Gastrocnemius medialis (tissue), 4 donors: ENCODE measurements at regions of chr15 and their contacts with region 1.

Region 1: GRCh38 chr15:43440721-43441281 is 52.2 kb downstream of the TP53BP1 start:
- DNase-seq: peak; percentile 56 to 58
- ATAC-seq: peak; percentile 100
- H3K4me3 ChIP-seq: no peak overlapping the region
- H3K27ac ChIP-seq: peak overlapping the region; percentile 60 to 77 (median 72)
- H3K4me1 ChIP-seq: peaks cover 11% of the 10 kb centered on the region in 2 donors
- H3K27me3 ChIP-seq: no peaks in the 10 kb centered on the region
- CTCF ChIP-seq: peak; percentile 37 to 60 (median 47)
- POLR2A ChIP-seq: no peak

Region 2: DNA sequence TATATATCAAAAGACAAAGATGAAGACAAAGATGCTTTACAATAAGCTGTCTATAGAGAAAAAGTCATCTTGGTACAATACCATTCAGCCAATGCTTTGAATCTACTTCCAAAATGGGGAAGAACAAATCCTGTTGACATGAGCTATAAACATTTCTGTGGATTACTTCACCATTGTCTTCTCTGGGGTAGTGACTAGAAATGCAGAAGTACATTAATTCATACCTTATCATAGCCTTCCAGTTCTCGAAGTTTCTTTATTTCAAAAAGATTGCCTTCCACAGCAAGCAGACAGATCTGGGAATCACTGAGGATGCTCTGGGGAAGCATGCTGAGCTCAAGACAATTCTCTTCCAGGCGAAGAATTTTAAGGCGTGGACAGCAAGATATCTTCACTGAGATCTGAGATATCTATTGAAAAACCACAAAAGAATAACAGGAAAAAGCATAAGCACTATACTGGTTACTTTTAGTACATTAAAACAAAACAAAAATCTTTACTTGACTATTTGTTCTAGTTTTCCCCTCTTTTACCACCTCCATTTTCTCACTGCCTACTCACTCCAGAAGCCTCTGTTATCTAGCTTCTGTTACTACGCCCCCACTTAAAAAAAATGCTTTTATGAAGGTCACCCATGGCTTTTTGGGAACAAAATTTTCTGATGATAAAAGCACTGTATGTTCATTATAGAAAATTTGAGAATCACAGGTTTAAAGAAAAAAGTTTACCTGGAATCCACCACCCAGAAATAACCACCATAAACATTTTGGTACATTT is 895.8 kb before region 1 on chr15:
- in situ Hi-C with region 1: no loop called
- intact Hi-C with region 1: no loop called
- DNase-seq: no peak
- ATAC-seq: no peak
- H3K4me3 ChIP-seq: no peak overlapping the region
- H3K27ac ChIP-seq: no peak overlapping the region
- H3K4me1 ChIP-seq: peaks cover 27 to 30% of the 10 kb centered on the region in 2 donors
- H3K27me3 ChIP-seq: no peaks in the 10 kb centered on the region
- CTCF ChIP-seq: no peak
- POLR2A ChIP-seq: no peak

Region 3: GRCh38 chr15:43312378-43312777 is 128.4 kb before region 1 on chr15:
- in situ Hi-C with region 1: no loop called
- intact Hi-C with region 1: no loop called
- DNase-seq: no peak
- ATAC-seq: no peak
- H3K4me3 ChIP-seq: no peak overlapping the region
- H3K27ac ChIP-seq: no peak overlapping the region
- H3K4me1 ChIP-seq: no peaks in the 10 kb centered on the region
- H3K27me3 ChIP-seq: peaks cover 0 to 7% (median 3%) of the 10 kb centered on the region in 3 donors
- CTCF ChIP-seq: no peak
- POLR2A ChIP-seq: no peak

Region 4: GRCh38 chr15:43329960-43330779 is 110.6 kb before region 1 on chr15 and contains the start of gene LCMT2:
- in situ Hi-C with region 1: no loop called
- intact Hi-C with region 1: no loop called
- DNase-seq: peak; percentile 91 to 94
- ATAC-seq: peak; percentile 95 to 98
- H3K4me3 ChIP-seq: peak within 1 kb of the TSS; percentile 75 to 98 (median 86)
- H3K27ac ChIP-seq: peak within 1 kb of the TSS; percentile 92 to 99 (median 94)
- H3K4me1 ChIP-seq: peaks cover 35 to 37% of the 10 kb centered on the region in 2 donors
- H3K27me3 ChIP-seq: no peaks in the 10 kb centered on the region
- CTCF ChIP-seq: peak in 4 of 5 experiments; percentile 7 to 44 (median 26)
- POLR2A ChIP-seq: peak; percentile 65 to 70
- total RNA-seq, gene LCMT2: 3.0 to 6.2 (median 5.3) TPM

Region 5: DNA sequence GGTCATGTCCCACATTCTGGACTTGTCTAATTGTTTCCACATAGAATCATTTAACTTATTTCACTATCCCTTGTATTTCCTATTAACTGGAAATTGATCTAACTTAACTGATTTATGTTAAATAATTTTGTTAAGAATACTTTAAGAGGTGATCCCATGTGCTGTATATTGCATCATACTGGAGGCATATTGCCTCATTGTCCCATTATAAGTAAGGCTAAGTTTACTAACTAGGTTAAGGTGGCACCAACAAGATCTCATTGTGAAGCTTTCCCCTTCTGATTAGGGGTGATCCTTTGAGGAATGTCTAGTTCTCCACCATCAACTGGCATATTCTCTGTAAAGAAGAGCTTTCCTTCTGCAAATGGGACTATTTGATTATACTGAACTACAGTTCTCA is 101.0 kb after region 1 on chr15:
- in situ Hi-C with region 1: no loop called
- intact Hi-C with region 1: loop called (anchors 5 kb)
- DNase-seq: no peak
- ATAC-seq: peak in 1 of 2 donors; percentile 75
- H3K4me3 ChIP-seq: no peak overlapping the region
- H3K27ac ChIP-seq: no peak overlapping the region
- H3K4me1 ChIP-seq: no peaks in the 10 kb centered on the region
- H3K27me3 ChIP-seq: no peaks in the 10 kb centered on the region
- CTCF ChIP-seq: no peak
- POLR2A ChIP-seq: no peak